ENCODE measurements at regions of chr6 and their contacts with region 1.

Region 1: DNA sequence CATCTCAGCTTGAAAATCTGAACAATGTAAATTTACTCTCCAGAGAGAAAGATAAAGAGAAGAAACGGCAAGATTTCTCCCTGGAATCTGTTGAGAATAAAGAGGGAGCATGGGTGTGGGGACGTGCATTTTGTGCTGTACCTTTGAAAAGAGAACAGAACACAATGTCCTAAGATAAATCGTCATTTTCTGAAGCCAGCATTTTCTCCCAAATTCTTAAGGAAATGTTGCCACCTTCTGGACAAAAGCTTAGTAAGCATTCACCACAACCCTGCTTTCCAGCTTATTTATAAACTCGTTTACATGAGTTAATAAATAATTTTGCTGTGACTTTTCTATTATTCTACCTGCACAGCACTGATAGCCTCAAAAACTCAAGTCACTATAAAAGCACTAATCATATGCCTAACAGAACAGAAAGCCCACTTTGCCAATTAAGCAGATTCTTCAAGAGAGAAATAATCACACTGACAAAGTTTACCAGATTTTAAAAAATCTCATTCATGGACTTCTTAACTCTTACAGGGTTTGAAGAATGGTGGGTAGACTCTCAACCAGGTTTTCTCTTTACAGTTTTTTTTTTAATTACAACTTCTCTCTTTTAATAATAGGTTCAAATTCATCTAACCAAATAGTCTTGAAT is 155.8 kb downstream of the MBOAT1 start:
- DNase-seq: peak; percentile 48
- ATAC-seq: peak; percentile 73
- H3K4me3 ChIP-seq: no peak overlapping the region
- H3K27ac ChIP-seq: no peak overlapping the region
- H3K4me1 ChIP-seq: no peaks in the 10 kb centered on the region
- H3K27me3 ChIP-seq: peaks cover 0 to 6% of the 10 kb centered on the region in 2 experiments; a peak in 1 of 5 replicates
- CTCF ChIP-seq: peak; percentile 66
- EP300 ChIP-seq: no peak
- POLR2A ChIP-seq: no peak
- RAD21 ChIP-seq: peak; percentile 54

Region 2: GRCh38 chr6:18595774-18596530 is 1460.5 kb before region 1 on chr6:
- CTCF ChIA-PET with region 1: interaction called, 12 read pairs
- POLR2A ChIA-PET with region 1: no interaction called
- in situ Hi-C with region 1: loop called (anchors 10 kb)
- intact Hi-C with region 1: loop called (anchors 1 kb)
- DNase-seq: peak; percentile 43
- ATAC-seq: peak; percentile 96
- H3K4me3 ChIP-seq: no peak overlapping the region
- H3K27ac ChIP-seq: no peak overlapping the region
- H3K4me1 ChIP-seq: 0 out of 2 replicates have a peak, but pooled peaks cover 5% of the 10 kb centered on the region
- H3K27me3 ChIP-seq: no peaks in the 10 kb centered on the region
- CTCF ChIP-seq: peak; percentile 88
- EP300 ChIP-seq: no peak
- POLR2A ChIP-seq: no peak
- RAD21 ChIP-seq: peak; percentile 45; the same call in 1 of the 2 replicates

Region 3: GRCh38 chr6:18742406-18742805 is 1314.1 kb before region 1 on chr6:
- CTCF ChIA-PET with region 1: no interaction called
- POLR2A ChIA-PET with region 1: no interaction called
- in situ Hi-C with region 1: no loop called
- intact Hi-C with region 1: loop called (anchors 2 kb)
- DNase-seq: no peak
- ATAC-seq: no peak
- H3K4me3 ChIP-seq: no peak overlapping the region
- H3K27ac ChIP-seq: no peak overlapping the region
- H3K4me1 ChIP-seq: no peaks in the 10 kb centered on the region
- H3K27me3 ChIP-seq: no peaks in the 10 kb centered on the region
- CTCF ChIP-seq: no peak
- EP300 ChIP-seq: no peak
- POLR2A ChIP-seq: no peak
- RAD21 ChIP-seq: no peak

Region 4: GRCh38 chr6:18990059-18990978 is 1066.2 kb before region 1 on chr6:
- CTCF ChIA-PET with region 1: no interaction called
- POLR2A ChIA-PET with region 1: no interaction called
- in situ Hi-C with region 1: loop called (anchors 10 kb)
- intact Hi-C with region 1: no loop called
- DNase-seq: peak; percentile 58
- ATAC-seq: peak; percentile 99
- H3K4me3 ChIP-seq: no peak overlapping the region
- H3K27ac ChIP-seq: no peak overlapping the region
- H3K4me1 ChIP-seq: no peaks in the 10 kb centered on the region
- H3K27me3 ChIP-seq: no peaks in the 10 kb centered on the region
- CTCF ChIP-seq: peak; percentile 89
- EP300 ChIP-seq: no peak
- POLR2A ChIP-seq: no peak
- RAD21 ChIP-seq: peak; percentile 33; the same call in 1 of the 2 replicates

Region 5: GRCh38 chr6:18997375-18997826 is 1059.1 kb before region 1 on chr6:
- CTCF ChIA-PET with region 1: interaction called, 6 read pairs
- POLR2A ChIA-PET with region 1: no interaction called
- in situ Hi-C with region 1: loop called (anchors 10 kb)
- intact Hi-C with region 1: loop called (anchors 1 kb)
- DNase-seq: peak; percentile 58
- ATAC-seq: peak; percentile 100
- H3K4me3 ChIP-seq: no peak overlapping the region
- H3K27ac ChIP-seq: no peak overlapping the region
- H3K4me1 ChIP-seq: no peaks in the 10 kb centered on the region
- H3K27me3 ChIP-seq: no peaks in the 10 kb centered on the region
- CTCF ChIP-seq: peak; percentile 75
- EP300 ChIP-seq: no peak
- POLR2A ChIP-seq: no peak
- RAD21 ChIP-seq: no peak; the same call in 1 of the 2 replicates

Region 6: GRCh38 chr6:19024737-19025136 is 1031.7 kb before region 1 on chr6:
- CTCF ChIA-PET with region 1: interaction called, 12 read pairs
- POLR2A ChIA-PET with region 1: no interaction called
- in situ Hi-C with region 1: no loop called
- intact Hi-C with region 1: no loop called
- DNase-seq: peak; percentile 30
- ATAC-seq: peak; percentile 78
- H3K4me3 ChIP-seq: no peak overlapping the region
- H3K27ac ChIP-seq: no peak overlapping the region
- H3K4me1 ChIP-seq: no peaks in the 10 kb centered on the region
- H3K27me3 ChIP-seq: no peaks in the 10 kb centered on the region
- CTCF ChIP-seq: peak; percentile 59
- EP300 ChIP-seq: no peak
- POLR2A ChIP-seq: no peak
- RAD21 ChIP-seq: no peak

Region 7: DNA sequence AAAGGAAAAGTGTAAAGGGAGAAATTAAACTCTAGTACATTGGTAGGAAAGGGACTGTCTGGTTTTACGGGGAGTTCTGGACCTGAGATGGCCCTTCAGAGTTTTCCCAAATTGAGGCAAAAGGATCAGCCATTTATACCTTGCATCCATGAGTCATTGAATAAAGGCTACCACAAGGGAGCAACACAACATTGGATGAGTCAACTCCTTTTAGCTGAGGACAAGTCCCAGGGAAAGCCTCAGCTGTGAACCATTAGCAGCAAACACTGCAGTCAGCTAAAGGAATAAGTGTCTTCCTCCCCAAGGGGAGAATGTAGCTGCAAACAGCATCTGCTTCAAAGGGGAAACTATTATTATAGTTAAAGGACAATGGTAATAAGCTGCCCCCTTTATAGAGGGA is 688.0 kb before region 1 on chr6:
- CTCF ChIA-PET with region 1: no interaction called
- POLR2A ChIA-PET with region 1: no interaction called
- in situ Hi-C with region 1: no loop called
- intact Hi-C with region 1: no loop called
- DNase-seq: no peak
- ATAC-seq: no peak
- H3K4me3 ChIP-seq: no peak overlapping the region
- H3K27ac ChIP-seq: no peak overlapping the region
- H3K4me1 ChIP-seq: no peaks in the 10 kb centered on the region
- H3K27me3 ChIP-seq: no peaks in the 10 kb centered on the region
- CTCF ChIP-seq: no peak
- EP300 ChIP-seq: no peak
- POLR2A ChIP-seq: no peak
- RAD21 ChIP-seq: no peak

Region 8: DNA sequence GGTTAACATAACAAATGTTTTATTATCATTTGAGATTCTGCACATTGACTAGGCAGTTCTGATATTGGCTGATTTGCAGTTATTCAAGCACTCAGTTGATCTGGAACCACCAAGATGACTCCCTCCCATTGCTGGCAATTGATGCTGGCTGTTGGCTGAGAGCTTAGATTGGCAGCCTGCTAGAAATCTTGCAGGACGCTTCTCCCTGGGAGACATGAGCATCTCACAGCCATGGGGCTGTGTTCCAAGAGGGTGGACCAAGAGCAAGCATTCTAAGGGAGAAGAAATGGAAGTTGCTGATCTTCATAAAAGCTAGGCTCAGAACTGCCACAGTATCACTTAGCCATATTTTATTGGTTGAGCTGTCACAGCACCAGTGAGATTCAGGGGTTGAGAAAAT is 452.8 kb before region 1 on chr6:
- CTCF ChIA-PET with region 1: no interaction called
- POLR2A ChIA-PET with region 1: no interaction called
- in situ Hi-C with region 1: no loop called
- intact Hi-C with region 1: no loop called
- DNase-seq: no peak
- ATAC-seq: no peak
- H3K4me3 ChIP-seq: no peak overlapping the region
- H3K27ac ChIP-seq: no peak overlapping the region
- H3K4me1 ChIP-seq: no peaks in the 10 kb centered on the region
- H3K27me3 ChIP-seq: no peaks in the 10 kb centered on the region
- CTCF ChIP-seq: no peak
- EP300 ChIP-seq: no peak
- POLR2A ChIP-seq: no peak
- RAD21 ChIP-seq: no peak

Region 9: DNA sequence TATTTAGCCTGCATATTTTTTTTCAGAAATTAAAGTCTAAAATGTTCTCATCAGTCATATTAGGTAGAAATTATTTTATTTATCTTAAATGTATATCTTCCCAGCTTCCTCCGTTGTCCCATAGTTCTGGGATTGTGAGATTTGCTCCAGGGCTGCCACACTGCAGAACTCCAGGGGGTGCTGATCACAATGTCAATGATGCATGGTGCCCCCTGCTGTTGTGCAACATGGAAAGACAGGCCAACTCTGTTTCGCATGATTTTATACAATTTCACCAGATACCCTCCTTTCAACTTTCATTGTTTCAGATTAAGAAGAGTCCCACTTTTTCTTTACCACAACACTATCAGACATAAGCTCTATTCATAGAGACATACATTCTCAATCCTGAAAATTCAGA is 183.4 kb before region 1 on chr6:
- CTCF ChIA-PET with region 1: no interaction called
- POLR2A ChIA-PET with region 1: no interaction called
- in situ Hi-C with region 1: no loop called
- intact Hi-C with region 1: no loop called
- DNase-seq: peak; percentile 49
- ATAC-seq: peak; percentile 87
- H3K4me3 ChIP-seq: no peak overlapping the region
- H3K27ac ChIP-seq: no peak overlapping the region
- H3K4me1 ChIP-seq: no peaks in the 10 kb centered on the region
- H3K27me3 ChIP-seq: no peaks in the 10 kb centered on the region
- CTCF ChIP-seq: peak; percentile 48
- EP300 ChIP-seq: no peak
- POLR2A ChIP-seq: no peak
- RAD21 ChIP-seq: no peak

Region 10: GRCh38 chr6:19918436-19918835 is 138.0 kb before region 1 on chr6:
- CTCF ChIA-PET with region 1: no interaction called
- POLR2A ChIA-PET with region 1: no interaction called
- in situ Hi-C with region 1: no loop called
- intact Hi-C with region 1: no loop called
- DNase-seq: no peak
- ATAC-seq: no peak
- H3K4me3 ChIP-seq: no peak overlapping the region
- H3K27ac ChIP-seq: no peak overlapping the region
- H3K4me1 ChIP-seq: no peaks in the 10 kb centered on the region
- H3K27me3 ChIP-seq: peaks cover 0 to 13% of the 10 kb centered on the region in 2 experiments; a peak in 1 of 5 replicates
- CTCF ChIP-seq: no peak
- EP300 ChIP-seq: no peak
- POLR2A ChIP-seq: no peak
- RAD21 ChIP-seq: no peak